Caco-2 (cell line): ENCODE measurements at regions of chr6 and their contacts with region 1.

Region 1: GRCh38 chr6:43174263-43175112 is 3.4 kb downstream of the SRF start:
- DNase-seq: peak; percentile 86 to 93
- H3K4me3 ChIP-seq: no peak overlapping the region
- H3K4me3 Mint-ChIP-seq: no peak overlapping the region
- H3K27ac Mint-ChIP-seq: no peak overlapping the region
- H3K4me1 ChIP-seq: peaks cover 25% of the 10 kb centered on the region; the same call in 1 of the 2 replicates
- H3K4me1 Mint-ChIP-seq: peaks cover 12% of the 10 kb centered on the region
- H3K27me3 ChIP-seq: no peaks in the 10 kb centered on the region
- H3K27me3 Mint-ChIP-seq: no peaks in the 10 kb centered on the region
- CTCF ChIP-seq: no peak

Region 2: DNA sequence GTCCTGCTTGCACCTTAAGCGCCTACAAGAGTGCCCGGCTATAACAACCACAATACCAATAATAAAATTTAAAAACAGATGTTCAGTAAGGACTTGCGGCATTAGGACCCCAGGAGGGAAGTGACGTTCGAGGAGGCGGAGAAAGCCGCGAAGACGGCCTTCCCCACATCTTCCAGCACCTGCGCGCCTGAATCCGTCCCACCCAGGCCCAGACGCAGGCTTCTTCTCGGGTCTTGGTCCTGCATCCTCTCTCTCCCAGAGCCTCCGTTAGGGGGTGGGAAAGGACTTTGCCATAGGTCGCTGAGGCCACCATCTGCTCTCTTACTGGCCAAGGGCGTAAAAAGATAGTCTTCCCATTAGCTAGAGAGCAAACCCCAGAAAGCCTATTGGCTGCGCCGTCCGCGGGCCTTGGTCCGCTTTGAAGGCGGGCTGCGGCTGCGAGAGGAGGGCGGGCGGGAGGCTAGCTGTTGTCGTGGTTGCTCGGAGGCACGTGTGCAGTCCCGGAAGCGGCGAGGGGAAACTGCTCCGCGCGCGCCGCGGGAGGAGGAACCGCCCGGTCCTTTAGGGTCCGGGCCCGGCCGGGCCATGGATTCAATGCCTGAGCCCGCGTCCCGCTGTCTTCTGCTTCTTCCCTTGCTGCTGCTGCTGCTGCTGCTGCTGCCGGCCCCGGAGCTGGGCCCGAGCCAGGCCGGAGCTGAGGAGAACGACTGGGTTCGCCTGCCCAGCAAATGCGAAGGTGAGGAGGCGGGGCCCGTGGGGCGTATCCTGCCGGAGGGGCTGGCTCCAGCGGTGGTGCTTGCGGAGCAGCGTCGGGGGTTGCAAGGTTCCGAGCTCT is 245.3 kb before region 1 on chr6 and contains the start of gene CNPY3:
- CTCF ChIA-PET with region 1: no interaction called
- POLR2A ChIA-PET with region 1: interaction called, 16 read pairs
- intact Hi-C with region 1: no loop called
- DNase-seq: peak; percentile 95 to 96
- H3K4me3 ChIP-seq: peak within 1 kb of the TSS; percentile 56
- H3K4me3 Mint-ChIP-seq: peak within 1 kb of the TSS; percentile 100
- H3K27ac Mint-ChIP-seq: peak within 1 kb of the TSS; percentile 76
- H3K4me1 ChIP-seq: peaks cover 8% of the 10 kb centered on the region
- H3K4me1 Mint-ChIP-seq: peaks cover 13% of the 10 kb centered on the region
- H3K27me3 ChIP-seq: no peaks in the 10 kb centered on the region
- H3K27me3 Mint-ChIP-seq: no peaks in the 10 kb centered on the region
- CTCF ChIP-seq: no peak
- total RNA-seq, gene CNPY3: 49.2 and 56.1 TPM in 2 replicates

Region 3: DNA sequence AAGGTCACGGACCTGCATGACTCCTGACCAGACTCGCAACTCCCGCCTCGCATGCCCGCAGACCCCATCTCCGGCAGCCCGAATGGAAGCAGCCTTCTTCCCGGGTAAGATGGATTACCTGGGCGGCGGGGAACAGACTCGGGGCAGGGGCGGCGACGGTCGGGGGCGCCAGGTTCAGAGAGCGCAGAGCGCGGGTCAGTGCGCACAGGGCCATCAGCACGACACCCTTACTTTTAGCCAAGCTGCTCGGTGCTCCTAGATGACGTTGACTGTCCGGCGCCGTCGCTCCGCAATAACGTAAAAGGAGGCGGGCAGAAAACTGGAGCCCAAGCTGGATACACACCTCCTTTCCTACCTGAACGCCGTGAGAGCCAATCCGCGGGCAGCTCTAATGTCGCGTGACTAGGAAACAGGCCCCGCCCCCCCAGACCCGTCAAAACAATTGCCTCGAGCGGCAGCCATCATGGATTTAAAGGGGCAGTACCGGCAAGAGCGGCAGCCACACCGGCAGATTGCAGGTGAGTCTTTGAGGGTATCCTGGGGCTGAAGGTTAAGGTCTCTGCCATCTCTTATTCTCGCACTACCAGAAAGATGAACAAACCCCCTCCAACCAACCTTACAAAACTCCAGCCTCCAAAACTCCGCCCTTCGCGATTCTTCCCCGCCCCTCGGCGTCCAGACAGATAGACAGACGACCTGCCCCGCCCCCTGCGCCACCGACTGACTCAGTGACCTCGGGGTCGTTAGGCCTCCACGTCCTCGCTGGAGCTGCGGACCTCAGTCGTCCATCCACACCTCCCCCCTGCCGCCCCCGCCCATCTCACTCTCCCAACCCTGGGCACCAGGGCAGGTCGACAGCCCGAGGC is 115.1 kb before region 1 on chr6 and contains the starts of genes KLC4 and MRPL2:
- CTCF ChIA-PET with region 1: interaction called, 5 read pairs
- POLR2A ChIA-PET with region 1: interaction called, 16 read pairs
- intact Hi-C with region 1: loop called (anchors 1 kb)
- DNase-seq: peak; percentile 96 to 98
- H3K4me3 ChIP-seq: peak within 1 kb of the TSS; percentile 80
- H3K4me3 Mint-ChIP-seq: peak within 1 kb of the TSS; percentile 88
- H3K27ac Mint-ChIP-seq: peak within 1 kb of the TSS; percentile 82
- H3K4me1 ChIP-seq: peaks cover 29% of the 10 kb centered on the region
- H3K4me1 Mint-ChIP-seq: peaks cover 34% of the 10 kb centered on the region
- H3K27me3 ChIP-seq: no peaks in the 10 kb centered on the region
- H3K27me3 Mint-ChIP-seq: no peaks in the 10 kb centered on the region
- CTCF ChIP-seq: no peak
- total RNA-seq, gene KLC4: 47.7 and 52.7 TPM in 2 replicates
- total RNA-seq, gene MRPL2: 123 and 124 TPM in 2 replicates

Region 4: DNA sequence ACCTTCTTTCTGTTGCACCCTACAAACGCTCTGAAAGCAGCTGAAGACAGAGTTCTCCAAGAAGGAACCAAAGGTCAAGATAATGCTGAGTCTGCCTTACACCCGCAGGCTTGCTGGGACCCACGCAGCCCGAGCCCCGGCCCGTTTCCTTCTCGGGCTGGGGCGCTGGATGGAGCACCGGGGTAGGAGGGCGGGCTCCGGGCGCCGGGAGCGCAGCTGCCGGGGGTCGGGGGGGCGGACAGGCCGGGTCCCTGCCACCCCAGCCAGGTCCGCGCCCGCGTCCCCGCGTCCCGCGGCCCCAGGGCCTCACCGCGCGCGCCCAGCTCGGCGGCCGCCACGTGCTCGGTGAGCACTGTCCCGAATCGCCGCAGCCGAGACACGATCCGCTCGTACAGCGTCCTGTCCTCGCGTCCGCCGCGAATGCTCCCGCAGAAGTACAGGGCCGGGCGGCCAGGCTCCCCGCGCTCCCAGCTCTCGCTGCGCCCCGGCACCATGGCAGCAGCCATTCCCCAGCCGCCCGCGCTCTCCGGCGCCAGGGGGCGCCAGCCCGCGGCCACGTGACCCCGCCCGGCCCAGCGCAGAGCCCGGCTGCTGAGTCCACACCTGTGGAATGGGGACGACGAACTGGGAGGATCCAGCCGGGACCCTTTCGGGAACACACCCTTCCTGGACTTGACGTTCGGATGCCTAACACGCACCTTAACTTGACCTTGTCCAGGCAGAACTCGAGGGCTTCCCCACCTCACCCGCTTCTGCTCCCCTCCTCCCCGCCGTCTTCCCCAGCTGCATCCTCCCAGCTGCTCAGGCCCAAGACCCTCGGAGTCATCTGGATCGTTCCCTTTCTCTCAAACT is 54.7 kb after region 1 on chr6 and contains the start of gene DNPH1:
- CTCF ChIA-PET with region 1: no interaction called
- POLR2A ChIA-PET with region 1: no interaction called
- intact Hi-C with region 1: loop called (anchors 5 kb)
- DNase-seq: peak; percentile 73 to 91
- H3K4me3 ChIP-seq: peak within 1 kb of the TSS; percentile 64
- H3K4me3 Mint-ChIP-seq: peak within 1 kb of the TSS; percentile 74
- H3K27ac Mint-ChIP-seq: peak within 1 kb of the TSS; percentile 75
- H3K4me1 ChIP-seq: peaks cover 11% of the 10 kb centered on the region
- H3K4me1 Mint-ChIP-seq: peaks cover 5% of the 10 kb centered on the region
- H3K27me3 ChIP-seq: no peaks in the 10 kb centered on the region
- H3K27me3 Mint-ChIP-seq: peaks cover 5% of the 10 kb centered on the region
- CTCF ChIP-seq: peak; percentile 52 to 91
- total RNA-seq, gene DNPH1: 56.1 and 62.6 TPM in 2 replicates

Region 5: GRCh38 chr6:43247113-43247999 is 72.9 kb after region 1 on chr6:
- CTCF ChIA-PET with region 1: no interaction called
- POLR2A ChIA-PET with region 1: no interaction called
- intact Hi-C with region 1: no loop called
- DNase-seq: peak; percentile 64 to 81
- H3K4me3 ChIP-seq: peak overlapping the region; percentile 37
- H3K4me3 Mint-ChIP-seq: peak overlapping the region; percentile 65
- H3K27ac Mint-ChIP-seq: no peak overlapping the region
- H3K4me1 ChIP-seq: peaks cover 9% of the 10 kb centered on the region; the same call in 1 of the 2 replicates
- H3K4me1 Mint-ChIP-seq: peaks cover 7% of the 10 kb centered on the region
- H3K27me3 ChIP-seq: no peaks in the 10 kb centered on the region; the same call in 1 of the 2 replicates
- H3K27me3 Mint-ChIP-seq: peaks cover 2% of the 10 kb centered on the region
- CTCF ChIP-seq: no peak

Region 6: GRCh38 chr6:43369174-43370022 is 194.9 kb after region 1 on chr6 and contains the start of gene ZNF318:
- CTCF ChIA-PET with region 1: no interaction called
- POLR2A ChIA-PET with region 1: interaction called, 3 read pairs
- intact Hi-C with region 1: loop called (anchors 5 kb)
- DNase-seq: peak; percentile 95 to 96
- H3K4me3 ChIP-seq: peak within 1 kb of the TSS; percentile 68
- H3K4me3 Mint-ChIP-seq: peak within 1 kb of the TSS; percentile 76
- H3K27ac Mint-ChIP-seq: peak within 1 kb of the TSS; percentile 67
- H3K4me1 ChIP-seq: peaks cover 13% of the 10 kb centered on the region
- H3K4me1 Mint-ChIP-seq: peaks cover 7% of the 10 kb centered on the region
- H3K27me3 ChIP-seq: no peaks in the 10 kb centered on the region
- H3K27me3 Mint-ChIP-seq: no peaks in the 10 kb centered on the region
- CTCF ChIP-seq: no peak
- total RNA-seq, gene ZNF318: 11.2 and 11.7 TPM in 2 replicates